T-cell (primary cell): ENCODE measurements at regions of chr16 and their contacts with region 1.

Region 1: GRCh38 chr16:74666425-74667254 is at the start of gene RFWD3:
- DNase-seq: peak; percentile 85 to 99 (median 96)
- ATAC-seq: peak; percentile 99 to 100 (median 100)
- H3K4me3 ChIP-seq: peak within 1 kb of the TSS; percentile 79 to 99
- H3K4me3 Mint-ChIP-seq: peak within 1 kb of the TSS; percentile 94 to 96 (median 94)
- H3K27ac ChIP-seq: peak within 1 kb of the TSS; percentile 70
- H3K27ac Mint-ChIP-seq: peak within 1 kb of the TSS; percentile 88 to 93
- H3K4me1 ChIP-seq: peaks cover 0 to 23% of the 10 kb centered on the region in 2 experiments
- H3K4me1 Mint-ChIP-seq: peaks cover 36 to 48% (median 44%) of the 10 kb centered on the region in 3 donors
- H3K27me3 ChIP-seq: no peaks in the 10 kb centered on the region
- H3K27me3 Mint-ChIP-seq: no peaks in the 10 kb centered on the region
- total RNA-seq, gene RFWD3: 42.6 to 52.0 (median 49.0) TPM

Region 2: DNA sequence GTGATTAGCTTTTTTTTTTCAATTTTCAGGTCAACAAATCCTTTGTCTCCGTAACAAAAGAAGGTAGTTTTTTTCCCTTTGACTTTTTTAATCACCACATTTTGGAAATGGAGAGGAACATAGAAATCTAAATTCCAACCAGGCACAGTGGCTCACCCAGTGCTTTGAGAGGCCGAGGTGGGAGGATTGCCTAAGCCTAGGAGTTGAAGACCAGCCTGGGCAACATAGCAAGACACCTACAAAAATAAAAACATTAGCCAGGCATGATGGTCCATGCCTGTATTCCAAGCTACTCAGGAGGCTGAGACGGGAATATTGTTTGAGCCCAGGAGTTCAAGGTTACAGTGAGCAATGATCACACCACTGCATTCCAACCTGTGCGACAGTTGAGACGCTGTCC is 364.3 kb before region 1 on chr16:
- CTCF ChIA-PET with region 1: interaction called in 1 of 2 experiments, 5 read pairs
- POLR2A ChIA-PET with region 1: interaction called in 1 of 2 experiments, 11 read pairs
- DNase-seq: no peak
- ATAC-seq: no peak
- H3K4me3 ChIP-seq: no peak overlapping the region
- H3K4me3 Mint-ChIP-seq: no peak overlapping the region
- H3K27ac ChIP-seq: no peak overlapping the region
- H3K27ac Mint-ChIP-seq: no peak overlapping the region
- H3K4me1 ChIP-seq: peaks cover 9 to 19% of the 10 kb centered on the region in 2 experiments
- H3K4me1 Mint-ChIP-seq: peaks cover 13 to 24% (median 23%) of the 10 kb centered on the region in 3 donors
- H3K27me3 ChIP-seq: no peaks in the 10 kb centered on the region
- H3K27me3 Mint-ChIP-seq: no peaks in the 10 kb centered on the region

Region 3: GRCh38 chr16:74556375-74556922 is 110.2 kb before region 1 on chr16:
- CTCF ChIA-PET with region 1: no interaction called
- POLR2A ChIA-PET with region 1: no interaction called
- DNase-seq: no peak
- ATAC-seq: no peak
- H3K4me3 ChIP-seq: no peak overlapping the region
- H3K4me3 Mint-ChIP-seq: no peak overlapping the region
- H3K27ac ChIP-seq: no peak overlapping the region
- H3K27ac Mint-ChIP-seq: no peak overlapping the region
- H3K4me1 ChIP-seq: peaks cover 6 to 10% of the 10 kb centered on the region in 2 experiments
- H3K4me1 Mint-ChIP-seq: peaks cover 40 to 51% (median 43%) of the 10 kb centered on the region in 3 donors
- H3K27me3 ChIP-seq: no peaks in the 10 kb centered on the region
- H3K27me3 Mint-ChIP-seq: no peaks in the 10 kb centered on the region

Region 4: DNA sequence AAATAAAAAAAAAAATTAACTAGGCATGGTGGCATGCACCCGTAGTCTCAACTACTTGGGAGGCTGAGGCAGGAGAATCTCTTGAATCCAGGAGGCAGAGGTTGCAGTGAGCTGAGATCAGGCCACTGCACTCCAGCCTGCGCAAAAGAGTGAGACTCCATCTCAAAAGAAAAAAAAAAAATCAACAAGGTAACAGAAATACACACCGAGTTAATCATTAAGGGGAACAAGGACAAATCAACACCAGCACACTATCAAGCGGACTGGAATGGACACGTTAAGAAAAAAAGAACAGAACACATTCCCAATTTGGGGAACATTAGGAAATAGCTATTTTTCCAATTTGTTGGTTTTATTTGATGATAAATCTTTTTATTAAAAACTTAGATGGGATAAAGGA is 31.3 kb before region 1 on chr16:
- CTCF ChIA-PET with region 1: interaction called in 1 of 2 experiments, 3 read pairs
- POLR2A ChIA-PET with region 1: interaction called in 1 of 2 experiments, 12 read pairs
- DNase-seq: no peak
- ATAC-seq: no peak
- H3K4me3 ChIP-seq: no peak overlapping the region
- H3K4me3 Mint-ChIP-seq: no peak overlapping the region
- H3K27ac ChIP-seq: no peak overlapping the region
- H3K27ac Mint-ChIP-seq: no peak overlapping the region
- H3K4me1 ChIP-seq: no peaks in the 10 kb centered on the region
- H3K4me1 Mint-ChIP-seq: no peaks in the 10 kb centered on the region
- H3K27me3 ChIP-seq: no peaks in the 10 kb centered on the region
- H3K27me3 Mint-ChIP-seq: no peaks in the 10 kb centered on the region

Region 5: GRCh38 chr16:74650966-74651567 is 15.6 kb before region 1 on chr16:
- CTCF ChIA-PET with region 1: interaction called, 4 to 7 read pairs
- POLR2A ChIA-PET with region 1: interaction called in 1 of 2 experiments, 16 read pairs
- DNase-seq: peak in 3 of 35 experiments; percentile 5 to 35 (median 16)
- ATAC-seq: no peak
- H3K4me3 ChIP-seq: no peak overlapping the region
- H3K4me3 Mint-ChIP-seq: no peak overlapping the region
- H3K27ac ChIP-seq: no peak overlapping the region
- H3K27ac Mint-ChIP-seq: no peak overlapping the region
- H3K4me1 ChIP-seq: peaks cover 3 to 20% of the 10 kb centered on the region in 2 experiments
- H3K4me1 Mint-ChIP-seq: peaks cover 31 to 41% (median 34%) of the 10 kb centered on the region in 3 donors
- H3K27me3 ChIP-seq: no peaks in the 10 kb centered on the region
- H3K27me3 Mint-ChIP-seq: no peaks in the 10 kb centered on the region

Region 6: GRCh38 chr16:74700438-74701225 is 34.0 kb after region 1 on chr16 and contains the start of gene MLKL:
- CTCF ChIA-PET with region 1: interaction called in 1 of 2 experiments, 6 read pairs
- POLR2A ChIA-PET with region 1: interaction called in 1 of 2 experiments, 14 read pairs
- DNase-seq: peak; percentile 19 to 73 (median 50)
- ATAC-seq: peak; percentile 78 to 84 (median 82)
- H3K4me3 ChIP-seq: peak within 1 kb of the TSS; percentile 91 to 94
- H3K4me3 Mint-ChIP-seq: peak within 1 kb of the TSS; percentile 97 to 100 (median 99)
- H3K27ac ChIP-seq: peak within 1 kb of the TSS; percentile 78
- H3K27ac Mint-ChIP-seq: peak within 1 kb of the TSS; percentile 97 to 99
- H3K4me1 ChIP-seq: peaks cover 15 to 35% of the 10 kb centered on the region in 2 experiments
- H3K4me1 Mint-ChIP-seq: peaks cover 49 to 59% (median 59%) of the 10 kb centered on the region in 3 donors
- H3K27me3 ChIP-seq: no peaks in the 10 kb centered on the region
- H3K27me3 Mint-ChIP-seq: no peaks in the 10 kb centered on the region
- total RNA-seq, gene MLKL: 27.4 to 40.7 (median 33.4) TPM

Region 7: GRCh38 chr16:74813109-74813641 is 146.5 kb after region 1 on chr16:
- CTCF ChIA-PET with region 1: no interaction called
- POLR2A ChIA-PET with region 1: no interaction called
- DNase-seq: peak; percentile 9 to 78 (median 56)
- ATAC-seq: peak; percentile 99 to 100 (median 100)
- H3K4me3 ChIP-seq: no peak overlapping the region
- H3K4me3 Mint-ChIP-seq: no peak overlapping the region
- H3K27ac ChIP-seq: no peak overlapping the region
- H3K27ac Mint-ChIP-seq: no peak overlapping the region
- H3K4me1 ChIP-seq: peaks cover 0 to 5% of the 10 kb centered on the region in 2 experiments
- H3K4me1 Mint-ChIP-seq: peaks cover 0 to 4% (median 0%) of the 10 kb centered on the region in 3 donors
- H3K27me3 ChIP-seq: peaks cover 0 to 7% of the 10 kb centered on the region in 2 experiments
- H3K27me3 Mint-ChIP-seq: peaks cover 0 to 2% of the 10 kb centered on the region in 2 donors

Region 8: DNA sequence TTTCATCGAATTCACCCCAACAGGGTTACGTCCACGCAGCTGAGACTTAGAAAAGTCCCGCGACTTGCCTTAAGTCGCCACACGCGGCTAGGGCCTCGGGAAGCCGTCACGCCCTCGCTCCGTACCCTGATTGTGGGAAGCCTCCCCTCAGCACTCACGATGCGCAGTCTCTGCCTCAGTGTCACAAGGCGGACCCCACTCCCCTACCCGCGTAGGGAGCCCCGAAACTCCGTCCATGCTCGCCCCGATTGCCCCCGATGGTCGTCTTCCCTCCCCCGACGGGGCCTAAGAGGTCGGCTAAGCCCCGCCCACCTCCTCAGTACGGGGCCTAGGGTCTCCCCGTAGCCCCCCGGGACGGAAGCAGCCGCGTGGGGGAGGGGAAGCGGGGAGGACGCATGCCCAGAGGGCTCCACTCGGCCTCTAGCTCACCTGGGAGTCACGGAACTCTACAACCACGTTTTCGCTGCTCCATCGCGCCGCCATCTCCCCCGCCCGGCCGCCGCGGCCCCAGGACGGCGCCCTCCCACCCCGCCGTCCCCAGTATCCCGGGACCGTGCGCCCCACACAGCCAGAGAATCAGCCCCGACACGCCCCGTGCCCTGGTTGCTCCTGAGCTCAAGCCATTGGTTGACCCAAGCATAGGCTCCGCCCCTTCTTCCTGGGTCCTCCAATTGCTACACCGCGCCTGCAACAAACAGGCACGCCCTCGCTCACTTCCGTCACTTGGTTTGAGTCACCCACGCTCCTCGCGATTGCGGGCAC is 318.1 kb after region 1 on chr16 and contains the start of gene WDR59:
- CTCF ChIA-PET with region 1: no interaction called
- POLR2A ChIA-PET with region 1: interaction called, 9 to 10 read pairs
- DNase-seq: peak; percentile 91 to 100 (median 99)
- ATAC-seq: peak; percentile 97 to 99 (median 99)
- H3K4me3 ChIP-seq: peak within 1 kb of the TSS; percentile 97 to 99
- H3K4me3 Mint-ChIP-seq: peak within 1 kb of the TSS; percentile 81 to 97 (median 89)
- H3K27ac ChIP-seq: peak within 1 kb of the TSS; percentile 71
- H3K27ac Mint-ChIP-seq: peak within 1 kb of the TSS; percentile 76 to 91
- H3K4me1 ChIP-seq: peaks cover 7 to 26% of the 10 kb centered on the region in 2 experiments
- H3K4me1 Mint-ChIP-seq: peaks cover 13 to 25% (median 21%) of the 10 kb centered on the region in 3 donors
- H3K27me3 ChIP-seq: peaks cover 0 to 3% of the 10 kb centered on the region in 2 experiments
- H3K27me3 Mint-ChIP-seq: no peaks in the 10 kb centered on the region
- total RNA-seq, gene WDR59: 97.7 to 120 (median 108) TPM

Region 9: GRCh38 chr16:75572864-75573542 is 906.4 kb after region 1 on chr16:
- CTCF ChIA-PET with region 1: no interaction called
- POLR2A ChIA-PET with region 1: interaction called in 1 of 2 experiments, 11 read pairs
- DNase-seq: no peak
- ATAC-seq: no peak
- H3K4me3 ChIP-seq: no peak overlapping the region
- H3K4me3 Mint-ChIP-seq: no peak overlapping the region
- H3K27ac ChIP-seq: no peak overlapping the region
- H3K27ac Mint-ChIP-seq: no peak overlapping the region
- H3K4me1 ChIP-seq: peaks cover 0 to 16% of the 10 kb centered on the region in 2 experiments
- H3K4me1 Mint-ChIP-seq: peaks cover 33 to 55% (median 52%) of the 10 kb centered on the region in 3 donors
- H3K27me3 ChIP-seq: no peaks in the 10 kb centered on the region
- H3K27me3 Mint-ChIP-seq: no peaks in the 10 kb centered on the region